Endothelial cell of umbilical vein (primary cell): ENCODE measurements at regions of chr10 and their contacts with region 1.

Region 1: DNA sequence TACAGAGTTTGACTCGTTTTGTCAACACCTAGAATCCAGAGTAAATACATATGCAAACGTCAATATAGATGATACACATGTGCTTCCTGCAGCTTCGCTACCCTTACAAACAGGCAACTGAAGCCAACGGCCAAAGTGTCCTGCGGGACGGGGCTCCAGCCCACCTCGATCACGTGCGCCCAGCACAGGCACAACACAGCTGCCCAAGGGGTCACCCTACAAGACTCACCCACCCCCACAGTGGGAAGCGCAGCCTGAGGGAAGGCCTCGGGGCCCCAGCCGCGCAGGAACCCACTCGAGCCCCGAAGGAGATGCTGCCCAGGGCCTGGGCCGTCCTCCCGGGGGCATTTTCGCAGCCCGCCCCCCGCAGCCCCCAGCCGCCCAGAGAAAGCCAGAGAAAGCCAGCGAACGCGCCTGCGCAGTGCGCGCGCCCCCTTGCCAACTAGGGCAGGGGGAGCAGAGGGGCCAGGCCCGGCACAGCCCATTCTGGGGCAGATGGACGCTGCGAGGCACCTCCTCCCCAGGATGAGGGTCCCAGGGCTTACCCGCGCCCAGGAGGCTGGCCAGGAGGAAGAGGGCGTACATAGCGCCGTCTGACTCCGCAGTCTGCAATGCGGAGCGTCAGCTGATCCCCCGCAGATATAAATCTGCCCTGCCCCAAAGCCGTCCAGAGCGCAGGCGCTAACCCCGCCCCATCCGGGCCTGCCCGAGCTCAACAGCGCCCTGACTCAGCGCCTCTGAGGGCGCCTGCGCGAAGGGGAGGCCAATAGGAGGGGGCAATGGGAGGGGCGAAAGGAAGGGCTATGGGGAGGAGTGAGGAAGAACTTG is at the start of gene PSAP:
- DNase-seq: peak; percentile 99
- H3K4me3 ChIP-seq: peak within 1 kb of the TSS; percentile 76 to 92 (median 85)
- H3K27ac ChIP-seq: peak within 1 kb of the TSS; percentile 85
- H3K4me1 ChIP-seq: peaks cover 17% of the 10 kb centered on the region
- H3K27me3 ChIP-seq: no peaks in the 10 kb centered on the region
- CTCF ChIP-seq: no peak
- POLR2A ChIP-seq: peak; percentile 98
- total RNA-seq, gene PSAP: 623 and 644 TPM in 2 replicates

Region 2: DNA sequence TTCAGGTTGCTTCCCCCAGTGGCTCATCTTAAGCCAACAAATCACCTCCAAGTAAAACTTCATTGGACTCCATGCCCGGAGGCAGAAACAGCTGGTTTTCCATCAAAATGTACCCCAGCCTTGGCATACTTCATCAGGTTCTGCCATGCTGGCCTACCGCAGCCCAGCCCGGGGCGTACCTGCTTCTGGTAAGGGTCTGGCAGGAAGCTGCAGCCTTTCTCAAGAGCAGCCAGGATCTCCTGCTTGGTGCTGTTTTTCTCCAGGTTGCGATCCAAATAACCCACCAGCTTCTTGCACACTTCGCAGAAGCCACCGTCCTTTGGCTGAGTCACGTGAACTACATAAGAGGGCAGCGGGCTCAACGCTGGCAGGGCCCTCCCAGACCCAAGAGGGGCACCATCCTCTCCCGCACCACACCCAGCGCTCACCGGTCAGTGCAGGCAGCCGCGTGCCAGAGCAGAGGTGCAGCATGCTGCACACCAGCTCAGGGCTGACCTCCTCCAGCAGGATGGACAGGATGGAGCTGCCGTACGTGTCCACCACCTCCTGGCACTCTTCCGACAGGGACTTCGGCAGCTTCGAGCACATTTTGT is 31.5 kb before region 1 on chr10:
- CTCF ChIA-PET with region 1: no interaction called
- POLR2A ChIA-PET with region 1: no interaction called
- dilution Hi-C with region 1: no loop called
- intact Hi-C with region 1: no loop called
- DNase-seq: no peak
- H3K4me3 ChIP-seq: no peak overlapping the region
- H3K27ac ChIP-seq: no peak overlapping the region
- H3K4me1 ChIP-seq: no peaks in the 10 kb centered on the region
- H3K27me3 ChIP-seq: no peaks in the 10 kb centered on the region
- CTCF ChIP-seq: no peak
- POLR2A ChIP-seq: no peak

Region 3: DNA sequence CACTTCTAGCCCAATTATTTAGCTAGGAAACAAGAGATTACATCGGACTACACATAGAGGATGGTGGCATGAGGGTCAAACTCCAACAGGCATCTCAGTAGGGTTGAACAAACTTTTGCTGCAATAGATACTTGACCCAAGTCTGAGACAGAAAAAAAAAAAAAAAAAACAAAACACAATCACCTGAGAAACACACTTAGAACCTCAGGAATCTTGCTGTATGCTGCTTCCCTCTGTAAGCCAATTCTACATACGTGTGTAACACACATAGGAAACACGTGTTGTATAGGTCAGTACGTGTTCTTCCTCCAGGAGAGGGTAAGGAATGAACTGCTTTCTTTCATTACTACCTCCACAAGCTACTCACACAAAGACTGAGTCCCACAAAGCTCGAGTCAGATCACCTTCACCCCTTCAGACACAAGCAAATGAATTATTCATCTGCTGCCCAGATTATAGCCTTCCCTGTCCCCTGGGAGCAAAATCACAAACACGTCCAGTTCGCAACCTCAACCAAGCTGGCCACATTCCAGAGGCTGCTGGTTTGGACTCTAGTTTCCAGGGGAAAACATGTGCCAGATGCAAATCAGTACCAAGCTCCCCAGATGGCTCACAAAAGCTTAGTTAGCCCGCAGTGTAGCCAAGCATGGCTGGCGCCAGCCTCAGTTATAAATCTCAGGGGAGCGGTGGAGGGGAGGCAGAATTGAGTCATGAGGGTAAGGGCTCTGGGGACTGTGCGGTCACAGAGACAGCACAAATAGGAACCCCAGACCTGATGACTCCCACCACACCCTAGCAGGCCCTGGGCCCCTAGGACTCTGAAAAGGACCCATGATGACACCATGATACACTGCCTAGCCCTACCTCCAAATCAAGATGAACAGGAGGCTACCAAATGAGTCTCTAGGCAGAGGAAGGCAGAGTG is 14.9 kb before region 1 on chr10:
- CTCF ChIA-PET with region 1: interaction called, 5 read pairs
- POLR2A ChIA-PET with region 1: interaction called, 19 read pairs
- dilution Hi-C with region 1: no loop called
- intact Hi-C with region 1: no loop called
- DNase-seq: peak; percentile 88
- H3K4me3 ChIP-seq: no peak overlapping the region
- H3K27ac ChIP-seq: peak overlapping the region; percentile 39
- H3K4me1 ChIP-seq: peaks cover 30% of the 10 kb centered on the region
- H3K27me3 ChIP-seq: no peaks in the 10 kb centered on the region
- CTCF ChIP-seq: no peak
- POLR2A ChIP-seq: no peak

Region 4: DNA sequence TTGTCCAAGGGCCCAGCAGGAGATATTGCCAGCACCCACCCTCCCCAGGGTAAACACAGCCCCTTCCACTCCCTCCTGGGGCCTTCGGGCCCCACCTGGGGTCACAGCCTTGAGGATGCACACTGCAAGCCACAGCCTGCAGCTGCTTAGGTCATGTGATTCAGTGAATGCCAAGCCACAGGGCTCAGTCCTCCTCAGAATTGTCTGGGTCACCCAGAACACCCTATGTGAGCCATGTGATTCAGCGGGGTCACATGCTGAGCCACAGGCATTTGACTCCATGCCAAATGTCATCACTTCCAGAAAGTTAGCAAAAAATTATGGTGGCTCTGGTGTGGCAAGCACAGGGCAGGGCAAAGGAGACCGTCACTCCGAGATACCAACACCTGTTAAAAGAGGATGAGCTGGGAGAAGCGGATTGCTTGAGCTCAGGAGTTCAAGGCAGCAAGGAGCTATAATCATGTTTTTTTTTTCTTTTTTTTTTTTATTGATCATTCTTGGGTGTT is 17.4 kb after region 1 on chr10:
- CTCF ChIA-PET with region 1: interaction called, 5 read pairs
- POLR2A ChIA-PET with region 1: interaction called, 12 read pairs
- dilution Hi-C with region 1: no loop called
- intact Hi-C with region 1: loop called (anchors 1 kb)
- DNase-seq: no peak
- H3K4me3 ChIP-seq: no peak overlapping the region
- H3K27ac ChIP-seq: no peak overlapping the region
- H3K4me1 ChIP-seq: peaks cover 4% of the 10 kb centered on the region
- H3K27me3 ChIP-seq: no peaks in the 10 kb centered on the region
- CTCF ChIP-seq: no peak
- POLR2A ChIP-seq: no peak

Region 5: GRCh38 chr10:71888623-71889387 is 38.0 kb after region 1 on chr10:
- CTCF ChIA-PET with region 1: interaction called, 4 read pairs
- POLR2A ChIA-PET with region 1: interaction called, 7 read pairs
- dilution Hi-C with region 1: no loop called
- intact Hi-C with region 1: loop called (anchors 1 kb)
- DNase-seq: peak; percentile 74
- H3K4me3 ChIP-seq: peak overlapping the region; percentile 36 to 73 (median 66)
- H3K27ac ChIP-seq: peak overlapping the region; percentile 83
- H3K4me1 ChIP-seq: peaks cover 8% of the 10 kb centered on the region
- H3K27me3 ChIP-seq: no peaks in the 10 kb centered on the region
- CTCF ChIP-seq: peak in 1 of 2 donors; percentile 22
- POLR2A ChIP-seq: no peak